Activated CD4-positive, alpha-beta T cell treated with anti-CD3 and anti-CD28 coated beads, Interleukin-2, amount 10 ng/mL, durations not matched to agents 7 days and 5 days (primary cell): ENCODE measurements at regions of chr5 and their contacts with region 1.

Region 1: DNA sequence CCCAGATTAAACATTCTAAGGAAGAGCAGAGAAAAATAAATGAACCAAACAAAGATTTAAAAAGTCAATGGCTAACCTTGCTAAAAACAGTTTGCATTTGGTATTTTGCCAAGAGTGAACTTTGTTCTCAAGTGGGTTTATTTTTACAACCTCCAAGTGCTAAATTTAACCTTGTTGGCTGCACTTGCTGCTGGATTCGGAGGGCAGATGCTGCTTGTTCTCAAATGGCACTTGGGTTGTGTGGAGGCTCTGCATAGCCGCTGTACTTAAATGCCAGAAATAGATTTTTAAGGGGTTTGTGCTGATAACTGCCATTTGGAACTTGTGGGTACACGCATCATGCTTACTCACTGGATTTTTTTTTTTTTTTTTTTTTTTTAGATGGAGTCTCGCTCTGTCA is 13.3 kb upstream of the SPATA24 start:
- DNase-seq: no peak
- H3K4me3 Mint-ChIP-seq: no peak overlapping the region
- H3K27ac Mint-ChIP-seq: no peak overlapping the region
- H3K4me1 Mint-ChIP-seq: peaks cover 59% of the 10 kb centered on the region
- H3K27me3 Mint-ChIP-seq: no peaks in the 10 kb centered on the region

Region 2: GRCh38 chr5:139430015-139430414 is 12.8 kb after region 1 on chr5:
- CTCF ChIA-PET with region 1: interaction called, 49 read pairs
- POLR2A ChIA-PET with region 1: no interaction called
- DNase-seq: no peak
- H3K4me3 Mint-ChIP-seq: no peak overlapping the region
- H3K27ac Mint-ChIP-seq: no peak overlapping the region
- H3K4me1 Mint-ChIP-seq: peaks cover 9% of the 10 kb centered on the region
- H3K27me3 Mint-ChIP-seq: no peaks in the 10 kb centered on the region

Region 3: GRCh38 chr5:139482050-139482889 is 65.1 kb after region 1 on chr5 and contains the start of gene STING1:
- CTCF ChIA-PET with region 1: interaction called, 14 read pairs
- POLR2A ChIA-PET with region 1: interaction called, 3 read pairs
- DNase-seq: peak; percentile 73
- H3K4me3 Mint-ChIP-seq: peak within 1 kb of the TSS; percentile 82
- H3K27ac Mint-ChIP-seq: peak within 1 kb of the TSS; percentile 95
- H3K4me1 Mint-ChIP-seq: peaks cover 43% of the 10 kb centered on the region
- H3K27me3 Mint-ChIP-seq: no peaks in the 10 kb centered on the region
- total RNA-seq, gene STING1: 175 TPM